ENCODE measurements at regions of chr10 and their contacts with region 1.

Region 1: DNA sequence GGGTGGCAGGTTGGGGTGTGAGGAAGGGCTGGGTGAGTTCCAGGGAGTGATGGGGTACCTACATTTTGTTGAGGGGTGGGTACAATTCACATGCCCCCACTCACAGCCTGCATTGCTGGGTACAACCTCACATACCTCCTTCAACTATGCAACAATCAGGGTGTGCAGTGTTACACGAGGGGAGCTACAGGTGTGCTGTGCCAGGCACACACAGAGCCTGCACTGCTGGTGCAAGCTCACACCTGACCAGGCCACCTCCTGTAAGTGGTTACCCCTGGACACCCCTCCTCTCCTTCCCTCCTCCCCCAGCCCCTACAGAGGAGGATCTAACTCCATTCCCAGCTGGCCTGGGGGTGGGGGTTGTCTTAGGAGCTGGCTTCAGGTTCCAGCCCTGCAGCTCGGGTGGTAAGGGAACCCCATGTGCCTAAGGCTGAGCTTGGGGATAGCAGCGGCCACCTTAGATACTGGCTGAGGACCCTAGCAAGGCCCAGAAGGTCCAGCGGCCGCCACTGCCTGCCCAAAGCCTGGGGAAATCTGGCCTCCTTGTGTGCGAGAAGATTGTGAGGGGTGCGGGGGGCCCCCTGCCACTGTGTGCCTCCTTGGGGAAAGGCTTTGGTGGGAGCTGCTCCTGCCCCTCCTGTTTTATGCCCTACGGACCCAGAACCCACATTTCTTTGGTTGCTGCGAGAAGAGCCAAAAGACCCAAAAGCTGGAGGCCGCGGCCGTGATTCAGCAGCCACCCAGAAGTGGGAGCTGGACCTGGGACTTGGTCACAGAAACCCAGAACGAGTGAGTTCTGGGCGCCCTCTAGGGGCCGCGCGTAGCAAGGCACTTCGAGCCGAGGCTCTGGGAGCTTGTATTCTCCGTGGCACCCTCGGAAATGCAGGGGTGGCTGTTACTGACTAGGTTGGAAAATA is 10.8 kb downstream of the TLX1 start:
- DNase-seq: peak; percentile 89
- ATAC-seq: peak; percentile 90

Region 2: DNA sequence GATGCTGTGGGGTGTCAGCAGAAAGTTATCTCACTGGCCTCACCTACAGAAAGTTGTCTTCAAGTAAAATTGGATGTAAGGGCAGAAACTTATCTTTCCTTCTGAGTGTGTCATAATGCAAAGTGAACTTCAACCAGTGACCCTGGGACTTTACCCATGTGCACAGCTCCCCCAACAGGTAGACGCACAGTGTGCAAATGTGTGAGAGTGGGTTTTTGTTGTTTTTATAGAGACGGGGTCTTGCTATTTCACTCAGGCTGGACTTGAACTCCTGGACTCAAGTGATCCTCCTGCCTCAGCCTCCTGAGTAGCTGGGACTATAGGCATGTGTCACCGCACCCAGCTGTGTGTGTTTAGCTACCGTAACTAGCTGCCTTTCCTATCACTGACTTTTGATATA is 86.5 kb before region 1 on chr10:
- intact Hi-C with region 1: no loop called
- DNase-seq: no peak
- ATAC-seq: no peak

Region 3: GRCh38 chr10:101067356-101068083 is 74.4 kb before region 1 on chr10:
- intact Hi-C with region 1: no loop called
- DNase-seq: peak; percentile 68
- ATAC-seq: peak; percentile 60

Region 4: GRCh38 chr10:101095542-101096213 is 46.2 kb before region 1 on chr10:
- intact Hi-C with region 1: loop called (anchors 5 kb)
- DNase-seq: peak; percentile 77
- ATAC-seq: peak; percentile 81